ENCODE measurements at regions of chr16 and their contacts with region 1.

Region 1: DNA sequence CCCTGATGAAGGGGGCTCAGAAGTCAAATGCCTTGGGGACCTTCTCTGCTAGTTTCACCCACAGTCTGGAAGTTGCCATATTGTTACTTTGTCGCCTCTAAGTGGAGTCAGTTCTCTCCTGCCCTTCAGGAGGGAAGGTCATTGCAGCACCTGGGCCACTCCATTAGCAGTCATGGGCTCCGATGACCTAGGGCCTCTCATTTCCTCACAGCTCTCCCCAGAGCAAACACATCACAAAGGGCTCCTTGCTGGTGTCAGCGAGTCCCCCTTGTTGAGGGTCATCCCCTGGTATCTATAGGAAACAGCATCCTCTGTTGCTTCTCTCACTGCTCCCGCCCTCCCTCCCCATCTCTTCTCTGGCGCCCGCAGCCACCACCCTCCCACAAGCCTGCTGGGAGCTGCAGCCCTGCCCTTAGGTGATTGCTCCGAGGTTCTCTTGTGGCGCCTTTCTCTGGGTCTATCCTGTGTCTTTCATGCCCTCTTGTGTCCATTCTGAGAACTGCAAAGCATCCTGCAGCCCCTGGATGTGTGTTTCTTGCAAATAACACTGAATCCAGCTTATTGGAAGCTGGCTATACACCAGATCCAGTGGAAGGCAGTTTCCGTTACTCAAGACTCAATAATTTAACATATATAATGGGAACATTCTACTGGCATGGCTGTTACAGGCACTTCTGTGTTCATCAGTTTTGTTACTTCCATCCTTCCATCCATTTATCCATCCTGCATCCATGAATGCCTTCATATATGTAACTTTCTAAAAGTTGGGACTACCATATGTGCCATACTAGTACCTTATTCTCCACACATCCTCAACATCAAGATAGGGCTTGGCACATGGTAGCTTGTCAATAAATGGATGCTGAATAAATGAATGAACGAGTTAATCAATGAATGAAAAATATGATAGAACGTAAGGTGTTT is 21.2 kb downstream of the PDILT start:
- DNase-seq: peak; percentile 30
- H3K4me3 ChIP-seq: no peak overlapping the region
- H3K27ac ChIP-seq: no peak overlapping the region
- H3K4me1 ChIP-seq: no peaks in the 10 kb centered on the region
- H3K27me3 ChIP-seq: no peaks in the 10 kb centered on the region
- CTCF ChIP-seq: peak; percentile 84 to 85

Region 2: GRCh38 chr16:18959031-18959505 is 1424.3 kb before region 1 on chr16:
- CTCF ChIA-PET with region 1: interaction called, 10 read pairs
- dilution Hi-C with region 1: no loop called
- in situ Hi-C with region 1: no loop called
- intact Hi-C with region 1: no loop called
- DNase-seq: no peak
- H3K4me3 ChIP-seq: no peak overlapping the region
- H3K27ac ChIP-seq: peak overlapping the region; percentile 34
- H3K4me1 ChIP-seq: peaks cover 38% of the 10 kb centered on the region
- H3K27me3 ChIP-seq: no peaks in the 10 kb centered on the region
- CTCF ChIP-seq: no peak

Region 3: DNA sequence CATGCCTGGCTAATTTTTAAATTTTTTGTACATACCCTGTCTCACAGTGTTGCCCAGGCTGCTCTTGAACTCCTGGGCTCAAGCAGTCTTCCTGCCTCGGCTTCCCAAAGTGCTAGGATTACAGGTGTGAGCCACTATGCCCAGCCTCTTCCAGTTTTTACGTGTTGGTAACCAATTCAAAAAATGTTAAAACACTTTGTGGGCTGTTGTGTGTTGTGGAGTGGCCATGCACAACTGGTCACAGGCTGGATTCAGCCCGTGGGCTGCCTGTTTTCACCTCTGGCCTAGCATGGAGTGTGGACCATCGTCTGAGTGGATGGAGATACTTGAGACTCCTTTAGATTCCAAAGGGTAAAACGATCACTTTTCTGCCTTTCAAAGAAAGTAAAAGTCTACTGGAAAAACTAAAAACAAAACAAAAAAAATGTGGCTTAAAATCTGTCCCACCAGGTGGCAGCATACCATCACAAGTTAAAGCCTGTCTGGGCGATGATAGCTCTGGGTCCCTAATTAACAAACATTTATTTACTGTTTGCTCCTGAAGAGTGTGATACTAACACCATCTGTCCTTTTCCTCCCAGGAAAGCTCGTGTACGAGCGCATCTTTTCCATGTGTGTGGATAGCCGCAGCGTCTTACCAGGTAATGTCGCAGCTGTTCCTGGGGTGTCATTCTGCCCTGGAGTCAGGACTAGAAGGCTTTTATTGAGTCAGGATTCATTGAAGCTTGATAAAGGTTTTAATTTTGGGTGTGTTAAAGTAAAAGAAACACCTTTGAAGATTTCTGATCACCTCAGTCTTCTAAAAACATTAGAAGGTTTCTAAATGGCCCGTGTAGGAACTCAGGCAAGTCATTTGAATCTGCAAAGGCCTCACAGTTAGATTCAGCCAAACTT is 782.0 kb before region 1 on chr16:
- CTCF ChIA-PET with region 1: no interaction called
- dilution Hi-C with region 1: no loop called
- in situ Hi-C with region 1: loop called (anchors 25 kb)
- intact Hi-C with region 1: loop called (anchors 10 kb)
- DNase-seq: no peak
- H3K4me3 ChIP-seq: no peak overlapping the region
- H3K27ac ChIP-seq: no peak overlapping the region
- H3K4me1 ChIP-seq: no peaks in the 10 kb centered on the region
- H3K27me3 ChIP-seq: no peaks in the 10 kb centered on the region
- CTCF ChIP-seq: peak; percentile 59 to 63

Region 4: GRCh38 chr16:19907161-19907992 is 476.0 kb before region 1 on chr16:
- CTCF ChIA-PET with region 1: interaction called, 6 read pairs
- dilution Hi-C with region 1: no loop called
- in situ Hi-C with region 1: loop called in 1 of 2 experiments (anchors 10 kb)
- intact Hi-C with region 1: loop called (anchors 1 kb)
- DNase-seq: peak; percentile 52
- H3K4me3 ChIP-seq: no peak overlapping the region
- H3K27ac ChIP-seq: no peak overlapping the region
- H3K4me1 ChIP-seq: no peaks in the 10 kb centered on the region
- H3K27me3 ChIP-seq: no peaks in the 10 kb centered on the region
- CTCF ChIP-seq: peak; percentile 92 to 97

Region 5: DNA sequence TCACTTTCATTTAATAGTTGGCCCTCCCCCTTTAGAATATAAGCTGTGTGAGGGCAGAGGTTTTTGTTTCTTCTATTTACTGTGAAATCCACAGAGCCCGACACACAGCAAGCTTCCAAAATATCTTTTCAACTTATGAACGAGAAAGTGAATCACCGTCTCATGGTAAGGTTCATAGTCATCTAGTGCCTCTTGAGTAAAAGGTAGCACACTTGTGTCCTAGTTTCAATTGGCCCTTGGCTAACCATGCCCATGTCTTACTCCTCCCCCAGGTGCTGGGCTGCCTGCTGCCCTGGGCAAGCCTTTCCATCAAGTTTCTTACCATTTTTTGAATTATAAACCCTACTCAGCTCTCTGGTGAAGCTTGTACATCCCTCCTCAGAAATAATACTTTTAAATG is 43.6 kb before region 1 on chr16:
- CTCF ChIA-PET with region 1: no interaction called
- dilution Hi-C with region 1: no loop called
- in situ Hi-C with region 1: no loop called
- intact Hi-C with region 1: no loop called
- DNase-seq: no peak
- H3K4me3 ChIP-seq: no peak overlapping the region
- H3K27ac ChIP-seq: no peak overlapping the region
- H3K4me1 ChIP-seq: no peaks in the 10 kb centered on the region
- H3K27me3 ChIP-seq: no peaks in the 10 kb centered on the region
- CTCF ChIP-seq: no peak

Region 6: DNA sequence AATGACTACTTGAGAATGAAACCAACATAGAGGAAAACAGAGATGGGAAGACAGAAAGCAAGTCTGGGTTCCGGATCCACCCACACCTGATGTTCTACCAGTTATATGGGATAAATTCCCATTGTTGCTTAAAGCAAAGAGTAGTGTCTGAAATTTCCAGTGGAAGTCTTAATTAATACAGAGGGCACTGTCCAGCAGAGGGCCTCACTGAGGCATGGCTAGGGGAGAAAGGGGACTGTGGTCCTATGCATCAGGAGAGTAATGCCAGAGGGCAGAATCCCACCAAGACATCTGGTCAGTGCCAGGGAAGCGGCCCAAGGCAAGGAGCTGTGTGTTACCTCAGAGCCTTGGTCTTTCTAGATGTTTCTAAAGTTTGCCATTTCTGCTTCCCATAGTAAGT is 23.4 kb before region 1 on chr16:
- CTCF ChIA-PET with region 1: interaction called, 10 read pairs
- dilution Hi-C with region 1: no loop called
- in situ Hi-C with region 1: no loop called
- intact Hi-C with region 1: no loop called
- DNase-seq: no peak
- H3K4me3 ChIP-seq: no peak overlapping the region
- H3K27ac ChIP-seq: no peak overlapping the region
- H3K4me1 ChIP-seq: no peaks in the 10 kb centered on the region
- H3K27me3 ChIP-seq: no peaks in the 10 kb centered on the region
- CTCF ChIP-seq: no peak